Activated CD8-positive, alpha-beta T cell treated with anti-CD3 and anti-CD28 coated beads, Interleukin-2, amount 10 ng/mL, durations not matched to agents 7 days and 5 days (primary cell): ENCODE measurements at regions of chr14 and their contacts with region 1.

Region 1: GRCh38 chr14:21868442-21869046 is 194.9 kb upstream of the OR4E1 start:
- DNase-seq: peak; percentile 87
- ATAC-seq: peak; percentile 98
- H3K4me3 Mint-ChIP-seq: peak overlapping the region; percentile 58
- H3K27ac Mint-ChIP-seq: peak overlapping the region; percentile 65
- H3K4me1 Mint-ChIP-seq: peaks cover 24% of the 10 kb centered on the region
- H3K27me3 Mint-ChIP-seq: peaks cover 3% of the 10 kb centered on the region

Region 2: GRCh38 chr14:21802441-21802840 is 66.1 kb before region 1 on chr14:
- CTCF ChIA-PET with region 1: no interaction called
- POLR2A ChIA-PET with region 1: no interaction called
- DNase-seq: no peak
- ATAC-seq: no peak
- H3K4me3 Mint-ChIP-seq: no peak overlapping the region
- H3K27ac Mint-ChIP-seq: no peak overlapping the region
- H3K4me1 Mint-ChIP-seq: no peaks in the 10 kb centered on the region
- H3K27me3 Mint-ChIP-seq: peaks cover 11% of the 10 kb centered on the region

Region 3: DNA sequence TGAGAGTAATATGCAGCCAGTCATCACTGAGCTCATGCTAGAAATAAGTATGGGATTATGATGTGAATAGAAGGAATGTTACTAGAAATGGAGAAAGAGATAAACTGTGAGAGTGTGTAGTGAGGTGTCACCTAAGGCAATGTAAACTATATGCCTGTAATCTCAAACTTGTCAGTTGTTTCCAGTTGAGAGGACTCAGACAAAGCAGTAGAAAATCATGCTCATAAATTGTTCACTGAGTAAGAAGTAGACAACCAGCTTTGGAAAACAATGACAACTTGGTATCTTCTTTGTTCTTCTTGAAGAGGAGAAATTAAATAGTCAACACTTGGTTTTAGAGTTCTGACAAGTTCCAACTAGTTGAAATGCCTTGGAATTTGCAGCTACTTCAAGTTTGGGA is 46.4 kb before region 1 on chr14:
- CTCF ChIA-PET with region 1: no interaction called
- POLR2A ChIA-PET with region 1: no interaction called
- DNase-seq: no peak
- ATAC-seq: no peak
- H3K4me3 Mint-ChIP-seq: no peak overlapping the region
- H3K27ac Mint-ChIP-seq: no peak overlapping the region
- H3K4me1 Mint-ChIP-seq: peaks cover 4% of the 10 kb centered on the region
- H3K27me3 Mint-ChIP-seq: peaks cover 29% of the 10 kb centered on the region

Region 4: GRCh38 chr14:21882226-21882625 is 13.7 kb after region 1 on chr14:
- CTCF ChIA-PET with region 1: interaction called, 11 read pairs
- POLR2A ChIA-PET with region 1: no interaction called
- DNase-seq: no peak
- ATAC-seq: no peak
- H3K4me3 Mint-ChIP-seq: no peak overlapping the region
- H3K27ac Mint-ChIP-seq: no peak overlapping the region
- H3K4me1 Mint-ChIP-seq: peaks cover under 1% of the 10 kb centered on the region
- H3K27me3 Mint-ChIP-seq: peaks cover 24% of the 10 kb centered on the region

Region 5: GRCh38 chr14:21997300-21997699 is 128.8 kb after region 1 on chr14:
- CTCF ChIA-PET with region 1: no interaction called
- POLR2A ChIA-PET with region 1: no interaction called
- DNase-seq: peak; percentile 63
- ATAC-seq: peak; percentile 91
- H3K4me3 Mint-ChIP-seq: peak overlapping the region; percentile 87
- H3K27ac Mint-ChIP-seq: peak overlapping the region; percentile 93
- H3K4me1 Mint-ChIP-seq: peaks cover 41% of the 10 kb centered on the region
- H3K27me3 Mint-ChIP-seq: peaks cover 3% of the 10 kb centered on the region